Ascending aorta (tissue), 2 donors: ENCODE measurements at regions of chr12 and their contacts with region 1.

Region 1: DNA sequence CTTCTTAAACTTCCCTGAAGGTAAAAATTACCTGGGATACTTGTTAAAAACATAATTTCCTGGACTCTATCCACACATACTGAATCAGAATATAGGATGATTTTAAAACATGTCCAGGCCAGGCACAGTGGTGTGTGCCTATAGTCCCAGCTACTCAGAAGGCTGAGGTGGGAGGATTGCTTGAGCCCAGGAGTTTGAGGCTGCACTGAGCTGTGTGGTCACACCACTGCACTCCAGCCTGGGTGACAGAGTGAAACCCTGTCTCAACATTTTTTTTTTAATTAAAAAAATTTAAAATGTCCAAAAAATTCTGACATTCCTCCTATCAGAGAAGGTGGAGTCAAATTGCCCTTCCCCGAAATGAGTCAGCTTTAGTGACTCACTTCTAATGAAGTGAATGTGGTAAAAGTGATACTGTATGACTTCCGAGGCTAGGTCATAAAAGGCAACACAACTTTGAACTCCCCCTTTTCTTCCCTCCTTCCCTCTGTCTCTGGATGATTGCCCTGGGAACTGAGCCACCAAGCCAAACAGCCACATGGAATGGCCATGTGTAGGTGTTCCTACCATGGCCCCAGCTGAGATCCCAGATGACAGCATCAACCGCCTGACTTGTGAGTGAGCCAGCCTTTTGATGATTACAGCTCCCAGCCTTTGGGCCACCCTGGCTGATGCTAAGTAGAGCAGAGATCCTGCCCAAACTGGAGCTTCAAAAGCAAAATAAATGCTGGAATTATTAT is 36.3 kb downstream of the LIMA1 start:
- DNase-seq: peak; percentile 75 to 91
- H3K4me3 ChIP-seq: no peak overlapping the region
- H3K27ac ChIP-seq: peak overlapping the region; percentile 79 to 84
- H3K4me1 ChIP-seq: peaks cover 18 to 57% of the 10 kb centered on the region in 2 donors
- H3K27me3 ChIP-seq: no peaks in the 10 kb centered on the region
- CTCF ChIP-seq: no peak

Region 2: GRCh38 chr12:50283229-50283923 is 36.3 kb after region 1 on chr12 and contains the start of gene LIMA1:
- intact Hi-C with region 1: loop called (anchors 5 kb)
- DNase-seq: peak; percentile 43 to 94
- H3K4me3 ChIP-seq: peak within 1 kb of the TSS; percentile 83 to 87
- H3K27ac ChIP-seq: peak within 1 kb of the TSS; percentile 59 to 68
- H3K4me1 ChIP-seq: peaks cover 0 to 5% of the 10 kb centered on the region in 2 donors
- H3K27me3 ChIP-seq: no peaks in the 10 kb centered on the region
- CTCF ChIP-seq: peak; percentile 31 to 89 (median 61)
- total RNA-seq, gene LIMA1: 79.4 TPM